Heart left ventricle (tissue), 16 donors: ENCODE measurements at regions of chr12 and their contacts with region 1.

Region 1: GRCh38 chr12:19893514-19893913 is 454.2 kb downstream of the AEBP2 start:
- DNase-seq: no peak
- ATAC-seq: peak in 3 of 4 donors; percentile 53 to 75 (median 64)
- H3K4me3 ChIP-seq: no peak overlapping the region
- H3K27ac ChIP-seq: peak overlapping the region in 1 of 12 donors; percentile 5
- H3K4me1 ChIP-seq: peaks cover 0 to 28% (median 7%) of the 10 kb centered on the region in 12 donors
- H3K27me3 ChIP-seq: no peaks in the 10 kb centered on the region
- CTCF ChIP-seq: peak in 7 of 12 donors; percentile 12 to 48 (median 34)
- POLR2A ChIP-seq: no peak

Region 2: DNA sequence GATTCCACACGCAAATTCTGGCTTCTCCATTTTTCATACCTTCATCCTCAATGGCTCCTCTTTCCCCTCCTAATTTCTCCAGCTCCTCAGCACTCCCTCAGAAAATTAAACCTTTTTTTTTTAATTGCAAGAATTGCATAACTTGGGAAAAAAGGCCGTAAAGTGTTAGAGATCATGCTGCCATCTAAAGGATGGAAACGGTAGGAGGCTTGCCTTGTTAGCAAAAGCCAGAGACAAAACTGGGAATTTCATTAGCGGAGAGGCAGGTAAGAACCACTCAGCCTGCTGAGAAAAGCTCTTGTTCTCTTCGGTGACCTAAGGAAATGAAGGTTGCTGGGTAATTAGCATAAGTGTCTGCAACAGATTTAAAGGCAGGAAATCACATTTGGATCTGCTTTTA is 249.9 kb before region 1 on chr12:
- intact Hi-C with region 1: no loop called
- DNase-seq: no peak
- ATAC-seq: peak in 2 of 4 donors; percentile 34 to 38
- H3K4me3 ChIP-seq: no peak overlapping the region
- H3K27ac ChIP-seq: no peak overlapping the region
- H3K4me1 ChIP-seq: peaks cover 0 to 12% (median 0%) of the 10 kb centered on the region in 12 donors
- H3K27me3 ChIP-seq: no peaks in the 10 kb centered on the region
- CTCF ChIP-seq: peak; percentile 23 to 78 (median 50)
- POLR2A ChIP-seq: no peak

Region 3: GRCh38 chr12:19744734-19745218 is 148.7 kb before region 1 on chr12:
- intact Hi-C with region 1: loop called in 1 of 10 experiments (anchors 10 kb)
- DNase-seq: no peak
- ATAC-seq: peak; percentile 78 to 92 (median 89)
- H3K4me3 ChIP-seq: no peak overlapping the region
- H3K27ac ChIP-seq: peak overlapping the region in 9 of 12 donors; percentile 28 to 75 (median 61)
- H3K4me1 ChIP-seq: peaks cover 4 to 27% (median 20%) of the 10 kb centered on the region in 12 donors
- H3K27me3 ChIP-seq: no peaks in the 10 kb centered on the region
- CTCF ChIP-seq: no peak
- POLR2A ChIP-seq: no peak

Region 4: GRCh38 chr12:19757317-19757877 is 136.1 kb before region 1 on chr12:
- intact Hi-C with region 1: loop called in 4 of 10 experiments (anchors 5 to 10 kb)
- DNase-seq: no peak
- ATAC-seq: peak in 2 of 4 donors; percentile 55 to 63
- H3K4me3 ChIP-seq: no peak overlapping the region
- H3K27ac ChIP-seq: peak overlapping the region in 6 of 12 donors; percentile 7 to 49 (median 40)
- H3K4me1 ChIP-seq: peaks cover 0 to 12% (median 0%) of the 10 kb centered on the region in 12 donors
- H3K27me3 ChIP-seq: no peaks in the 10 kb centered on the region
- CTCF ChIP-seq: peak; percentile 43 to 83 (median 66)
- POLR2A ChIP-seq: no peak

Region 5: DNA sequence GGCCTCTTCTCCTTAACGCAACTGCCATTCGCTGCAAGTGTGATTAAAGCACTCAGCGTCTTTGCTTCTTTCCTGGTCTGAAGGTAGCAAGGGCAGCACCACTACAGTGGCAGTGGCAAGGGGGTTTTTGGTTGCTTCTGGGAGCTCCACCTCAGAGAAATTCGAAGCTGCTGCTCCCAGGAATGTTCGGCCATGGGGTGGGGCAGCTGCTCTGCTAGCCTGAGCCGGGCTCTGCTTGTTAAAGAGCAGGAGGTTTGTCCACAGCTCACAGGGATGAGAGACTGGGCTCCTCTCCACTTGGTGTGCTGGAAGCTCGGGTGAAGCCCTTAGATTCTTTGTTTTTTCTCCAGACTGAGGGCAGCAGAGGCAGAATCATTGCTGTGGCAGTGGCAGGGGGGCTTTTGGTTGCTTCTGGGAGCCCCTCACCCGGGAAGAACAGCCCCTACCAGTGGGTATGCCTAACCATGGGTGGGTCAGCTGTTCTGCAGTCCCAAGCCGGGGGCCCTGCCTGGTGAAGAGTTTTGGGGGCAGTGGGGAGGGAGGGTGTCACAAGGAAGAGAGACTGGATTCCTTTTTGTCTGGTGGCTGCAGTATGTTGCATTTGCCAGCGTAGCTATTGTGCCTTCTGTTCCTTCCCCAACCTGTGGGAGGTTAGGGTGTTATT is 114.0 kb before region 1 on chr12:
- intact Hi-C with region 1: loop called in 5 of 10 experiments (anchors 5 to 10 kb)
- DNase-seq: peak in 4 of 5 donors; percentile 44 to 71 (median 54)
- ATAC-seq: peak; percentile 84 to 92 (median 88)
- H3K4me3 ChIP-seq: no peak overlapping the region
- H3K27ac ChIP-seq: peak overlapping the region in 9 of 12 donors; percentile 16 to 52 (median 38)
- H3K4me1 ChIP-seq: peaks cover 0 to 16% (median 9%) of the 10 kb centered on the region in 12 donors
- H3K27me3 ChIP-seq: no peaks in the 10 kb centered on the region
- CTCF ChIP-seq: peak in 7 of 12 donors; percentile 9 to 56 (median 19)
- POLR2A ChIP-seq: no peak

Region 6: DNA sequence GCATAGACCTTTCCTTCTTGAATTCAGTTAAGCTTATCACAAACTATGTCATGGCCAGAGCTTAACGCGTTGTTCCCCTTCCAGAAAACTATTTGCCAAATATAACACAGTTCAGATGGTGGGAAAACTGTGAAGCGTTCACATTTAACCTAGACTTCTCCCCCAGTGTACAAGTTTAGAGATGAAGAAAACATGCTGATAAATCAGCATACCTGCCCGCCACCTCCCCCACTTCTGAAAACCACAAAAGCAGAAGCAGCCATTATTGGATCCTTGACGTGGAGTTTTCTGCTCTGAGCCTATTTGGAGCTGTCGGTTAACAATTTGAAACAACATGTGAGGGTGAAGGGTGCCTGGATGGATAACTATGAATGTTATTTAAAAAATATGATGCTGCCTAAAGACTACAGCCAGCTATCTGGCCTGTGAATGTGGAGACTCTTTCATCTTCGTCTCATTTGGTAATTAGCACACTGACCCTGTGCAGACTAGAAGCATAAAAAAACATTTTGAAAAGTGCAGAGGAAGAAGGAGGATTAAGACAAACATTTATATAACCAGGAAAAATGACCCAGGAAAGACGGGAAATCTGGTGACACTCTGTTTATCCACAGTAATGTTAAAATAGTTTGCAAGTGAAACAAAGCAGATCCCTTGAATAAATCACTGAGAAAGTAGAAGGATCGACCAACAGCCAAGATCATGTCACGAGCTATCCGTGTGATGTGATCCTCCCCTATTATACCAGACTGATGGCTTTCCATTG is 46.0 kb before region 1 on chr12:
- intact Hi-C with region 1: loop called in 1 of 10 experiments (anchors 5 kb)
- DNase-seq: peak in 4 of 5 donors; percentile 38 to 57 (median 44)
- ATAC-seq: peak; percentile 87 to 89 (median 89)
- H3K4me3 ChIP-seq: peak overlapping the region in 7 of 12 donors; percentile 1 to 27 (median 12)
- H3K27ac ChIP-seq: peak overlapping the region; percentile 76 to 96 (median 86)
- H3K4me1 ChIP-seq: peaks cover 0 to 22% (median 13%) of the 10 kb centered on the region in 12 donors
- H3K27me3 ChIP-seq: no peaks in the 10 kb centered on the region
- CTCF ChIP-seq: no peak
- POLR2A ChIP-seq: no peak